AG04449 (cell line): ENCODE measurements at regions of chr12 and their contacts with region 1.

Region 1: GRCh38 chr12:49707128-49707811 is at the start of gene FMNL3:
- DNase-seq: peak; percentile 59
- H3K4me3 ChIP-seq: peak within 1 kb of the TSS; percentile 70
- CTCF ChIP-seq: peak; percentile 90

Region 2: GRCh38 chr12:49662998-49663843 is 44.0 kb before region 1 on chr12:
- CTCF ChIA-PET with region 1: interaction called, 71 read pairs
- POLR2A ChIA-PET with region 1: interaction called, 3 read pairs
- DNase-seq: no peak
- H3K4me3 ChIP-seq: no peak overlapping the region
- CTCF ChIP-seq: no peak

Region 3: GRCh38 chr12:49673446-49674317 is 33.6 kb before region 1 on chr12:
- CTCF ChIA-PET with region 1: interaction called, 60 read pairs
- POLR2A ChIA-PET with region 1: interaction called, 11 read pairs
- DNase-seq: no peak
- H3K4me3 ChIP-seq: peak overlapping the region; percentile 16; the same call in 1 of the 2 replicates
- CTCF ChIP-seq: peak; percentile 36

Region 4: DNA sequence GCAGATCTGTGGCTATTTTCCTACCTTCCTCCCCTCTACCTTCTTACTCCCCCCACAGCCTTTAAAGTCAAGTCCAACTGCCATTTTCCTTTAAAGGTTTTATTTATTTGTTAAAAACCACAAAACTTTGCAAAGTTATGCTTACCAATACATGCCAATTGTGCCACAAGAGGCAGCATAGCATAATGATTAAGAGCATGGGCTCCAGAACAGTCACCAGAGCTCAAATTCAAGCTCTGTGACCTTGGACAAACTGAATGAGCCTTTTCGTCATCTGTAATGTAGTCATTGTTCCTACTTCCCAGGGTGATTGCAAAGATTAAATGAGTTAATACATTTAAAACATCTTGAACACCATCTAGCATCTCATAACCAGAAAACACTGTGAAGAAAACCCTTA is 12.9 kb after region 1 on chr12:
- CTCF ChIA-PET with region 1: interaction called, 36 read pairs
- POLR2A ChIA-PET with region 1: no interaction called
- DNase-seq: no peak
- H3K4me3 ChIP-seq: no peak overlapping the region
- CTCF ChIP-seq: no peak

Region 5: GRCh38 chr12:49842519-49843352 is 135.5 kb after region 1 on chr12 and contains the start of gene BCDIN3D:
- CTCF ChIA-PET with region 1: no interaction called
- POLR2A ChIA-PET with region 1: no interaction called
- DNase-seq: peak; percentile 29
- H3K4me3 ChIP-seq: peak within 1 kb of the TSS; percentile 86
- CTCF ChIP-seq: no peak